Activated CD4-positive, alpha-beta memory T cell treated with anti-CD3 and anti-CD28 coated beads, Interleukin-2, amount 10 ng/mL, durations not matched to agents 7 days and 5 days (primary cell): ENCODE measurements at regions of chr1 and their contacts with region 1.

Region 1: DNA sequence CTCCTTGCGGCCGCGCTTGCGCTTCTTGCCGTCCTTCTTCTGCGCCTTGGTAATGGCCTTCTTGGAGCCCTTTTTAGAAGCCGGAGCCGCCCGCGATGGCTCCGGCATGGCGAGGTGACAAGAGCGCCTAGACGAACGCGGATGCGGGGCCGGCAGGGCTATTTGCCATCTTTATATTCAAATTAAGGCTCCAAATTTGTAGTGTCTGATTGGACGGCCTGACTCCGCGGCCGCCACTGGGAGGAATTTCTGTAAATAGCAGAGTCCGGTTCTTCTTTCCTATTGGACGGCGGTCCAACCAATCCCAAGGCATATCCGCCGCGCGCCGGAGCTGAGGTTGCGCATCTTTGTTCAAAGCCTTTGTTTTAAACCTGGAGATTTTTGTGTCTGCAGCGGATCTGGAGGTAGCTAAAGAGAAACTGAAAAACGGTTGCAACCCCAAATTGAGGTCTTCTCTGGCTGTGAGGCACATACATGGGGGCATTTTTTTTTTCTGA is 22.6 kb upstream of the RNF187 start:
- DNase-seq: peak; percentile 96
- H3K4me3 Mint-ChIP-seq: peak overlapping the region; percentile 76
- H3K27ac Mint-ChIP-seq: peak overlapping the region; percentile 91
- H3K4me1 Mint-ChIP-seq: peaks cover 68% of the 10 kb centered on the region
- H3K27me3 Mint-ChIP-seq: no peaks in the 10 kb centered on the region

Region 2: DNA sequence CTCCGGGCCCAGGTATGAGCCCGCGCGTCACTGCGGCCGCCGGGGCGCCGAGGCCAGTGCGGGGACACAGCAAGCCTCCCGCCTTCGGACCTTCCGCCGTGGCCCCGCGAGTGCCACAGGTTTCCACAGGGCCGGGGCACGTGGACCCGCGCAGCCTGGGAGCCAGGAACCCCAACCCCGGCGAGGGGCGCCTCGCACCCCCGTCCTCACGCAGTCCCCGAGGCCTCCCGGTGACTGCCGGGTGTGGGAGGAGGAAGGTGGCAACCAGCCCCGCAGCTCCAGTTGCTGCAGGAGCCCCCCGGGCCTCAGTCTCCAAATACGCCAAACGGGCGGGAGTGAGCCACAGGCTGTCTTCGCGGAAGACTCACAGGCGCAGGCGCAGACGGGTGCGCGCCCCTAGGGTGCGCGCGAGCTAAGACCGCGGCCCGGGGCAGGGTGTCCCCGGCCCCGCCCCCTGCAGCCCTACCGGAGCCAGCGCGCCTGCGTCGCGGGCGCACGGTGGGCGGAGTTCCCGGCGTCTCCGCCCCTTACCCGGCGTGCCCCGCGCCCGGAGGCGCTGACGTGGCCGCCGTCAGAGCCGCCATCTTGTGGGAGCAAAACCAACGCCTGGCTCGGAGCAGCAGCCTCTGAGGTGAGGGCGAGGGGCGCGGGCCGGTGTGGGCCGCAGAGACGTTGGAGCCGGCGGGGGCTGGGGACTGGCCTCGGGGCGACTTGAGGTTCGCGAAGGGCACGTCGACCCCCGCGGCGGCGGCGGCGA is 382.2 kb before region 1 on chr1 and contains the start of gene ARF1:
- CTCF ChIA-PET with region 1: no interaction called
- POLR2A ChIA-PET with region 1: interaction called, 12 read pairs
- DNase-seq: peak; percentile 94
- H3K4me3 Mint-ChIP-seq: peak within 1 kb of the TSS; percentile 90
- H3K27ac Mint-ChIP-seq: peak within 1 kb of the TSS; percentile 87
- H3K4me1 Mint-ChIP-seq: peaks cover 50% of the 10 kb centered on the region
- H3K27me3 Mint-ChIP-seq: no peaks in the 10 kb centered on the region
- total RNA-seq, gene ARF1: 368 to 376 TPM

Region 3: GRCh38 chr1:228405987-228406265 is 58.6 kb before region 1 on chr1:
- CTCF ChIA-PET with region 1: interaction called, 6 read pairs
- POLR2A ChIA-PET with region 1: interaction called, 90 read pairs
- DNase-seq: no peak
- H3K4me3 Mint-ChIP-seq: peak overlapping the region; percentile 85
- H3K27ac Mint-ChIP-seq: peak overlapping the region; percentile 90
- H3K4me1 Mint-ChIP-seq: peaks cover 61% of the 10 kb centered on the region
- H3K27me3 Mint-ChIP-seq: no peaks in the 10 kb centered on the region

Region 4: GRCh38 chr1:228445843-228446650 is 18.5 kb before region 1 on chr1:
- CTCF ChIA-PET with region 1: no interaction called
- POLR2A ChIA-PET with region 1: interaction called, 11 read pairs
- DNase-seq: peak; percentile 52
- H3K4me3 Mint-ChIP-seq: peak overlapping the region; percentile 74
- H3K27ac Mint-ChIP-seq: peak overlapping the region; percentile 18
- H3K4me1 Mint-ChIP-seq: peaks cover 19% of the 10 kb centered on the region
- H3K27me3 Mint-ChIP-seq: peaks cover 57% of the 10 kb centered on the region

Region 5: DNA sequence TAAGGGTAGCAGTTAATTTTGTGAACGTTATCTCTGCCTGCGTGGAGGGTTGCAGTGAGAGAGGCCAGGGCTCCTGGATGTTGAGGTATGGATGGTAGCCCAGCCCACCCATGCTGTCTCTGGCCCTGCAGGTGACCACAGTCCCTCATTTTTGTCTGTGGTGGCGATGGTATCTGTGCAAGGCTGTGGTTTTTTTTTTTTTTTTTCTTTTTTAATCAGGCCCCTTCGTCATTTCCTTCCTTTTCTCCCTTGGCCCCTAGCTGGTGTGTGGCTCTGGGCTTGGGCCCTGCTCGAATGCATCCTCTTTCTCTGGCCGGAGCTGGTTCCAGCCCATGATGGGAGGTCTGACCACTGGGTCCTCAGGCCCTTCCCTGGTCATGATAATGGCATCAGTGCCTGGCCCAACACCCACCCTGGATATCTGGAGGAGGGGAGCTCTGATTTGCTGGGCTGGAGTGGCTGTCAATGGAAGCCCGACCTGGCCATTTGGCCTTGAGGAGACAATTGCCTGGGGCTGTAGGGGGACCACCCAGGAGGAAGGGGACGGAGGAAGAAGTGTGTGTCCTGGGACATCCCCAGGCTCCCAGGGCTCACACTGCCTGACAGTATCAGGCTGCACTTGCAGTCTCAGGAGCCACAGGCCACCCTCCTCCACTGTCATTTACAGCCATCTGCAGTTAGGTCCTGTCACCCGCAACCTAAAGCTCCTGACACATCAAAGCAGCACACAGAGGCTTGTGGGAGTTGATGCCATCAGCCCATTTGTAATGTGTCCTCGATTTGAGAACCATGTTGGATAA is 14.6 kb after region 1 on chr1:
- CTCF ChIA-PET with region 1: interaction called, 21 read pairs
- POLR2A ChIA-PET with region 1: interaction called, 151 read pairs
- DNase-seq: peak; percentile 59
- H3K4me3 Mint-ChIP-seq: peak overlapping the region; percentile 48
- H3K27ac Mint-ChIP-seq: peak overlapping the region; percentile 91
- H3K4me1 Mint-ChIP-seq: peaks cover 62% of the 10 kb centered on the region
- H3K27me3 Mint-ChIP-seq: peaks cover 2% of the 10 kb centered on the region

Region 6: DNA sequence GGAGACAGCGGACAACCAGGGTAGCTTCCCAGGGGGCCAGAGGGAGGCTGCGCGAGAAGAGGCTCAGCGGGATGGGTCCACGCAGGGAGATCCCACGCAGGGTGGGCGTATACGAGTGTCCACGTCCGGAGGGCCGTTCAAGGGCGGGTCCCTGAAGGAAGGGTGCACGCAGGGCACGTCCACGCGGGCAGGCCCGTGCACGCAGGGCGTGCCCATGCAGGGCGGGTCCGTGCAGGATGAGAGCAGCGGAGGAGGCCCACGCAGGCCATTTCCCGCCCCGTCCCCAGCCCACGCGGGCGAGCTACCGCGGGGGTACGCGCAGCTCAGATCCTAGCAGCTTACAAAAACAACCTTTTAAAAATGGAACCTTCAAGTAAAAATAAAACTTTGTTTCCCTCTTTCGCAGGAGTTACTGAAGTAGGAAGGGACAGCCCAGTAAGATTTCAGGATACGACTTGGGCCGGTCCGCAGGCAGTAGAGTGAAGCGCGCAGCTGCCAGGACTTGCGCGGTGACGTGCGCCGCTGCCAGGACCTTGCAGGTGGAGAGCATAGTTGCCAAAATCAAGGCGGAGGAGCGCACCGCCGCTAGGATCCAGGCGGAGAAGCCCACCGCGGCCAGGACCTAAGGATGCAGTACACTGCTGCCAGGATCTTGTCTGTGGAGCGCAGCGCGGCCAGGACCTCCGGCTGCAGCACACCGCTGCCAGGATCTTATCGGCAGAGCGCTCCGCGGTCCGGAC is 22.2 kb after region 1 on chr1:
- CTCF ChIA-PET with region 1: interaction called, 24 read pairs
- POLR2A ChIA-PET with region 1: interaction called, 153 read pairs
- DNase-seq: peak; percentile 82
- H3K4me3 Mint-ChIP-seq: peak overlapping the region; percentile 94
- H3K27ac Mint-ChIP-seq: peak overlapping the region; percentile 96
- H3K4me1 Mint-ChIP-seq: peaks cover 56% of the 10 kb centered on the region
- H3K27me3 Mint-ChIP-seq: no peaks in the 10 kb centered on the region

Region 7: GRCh38 chr1:228500901-228501871 is 36.7 kb after region 1 on chr1:
- CTCF ChIA-PET with region 1: interaction called, 20 read pairs
- POLR2A ChIA-PET with region 1: interaction called, 24 read pairs
- DNase-seq: peak; percentile 90
- H3K4me3 Mint-ChIP-seq: peak overlapping the region; percentile 40
- H3K27ac Mint-ChIP-seq: peak overlapping the region; percentile 41
- H3K4me1 Mint-ChIP-seq: peaks cover 38% of the 10 kb centered on the region
- H3K27me3 Mint-ChIP-seq: no peaks in the 10 kb centered on the region

Region 8: GRCh38 chr1:228751360-228752113 is 287.0 kb after region 1 on chr1:
- CTCF ChIA-PET with region 1: no interaction called
- POLR2A ChIA-PET with region 1: no interaction called
- DNase-seq: no peak
- H3K4me3 Mint-ChIP-seq: no peak overlapping the region
- H3K27ac Mint-ChIP-seq: no peak overlapping the region
- H3K4me1 Mint-ChIP-seq: peaks cover 53% of the 10 kb centered on the region
- H3K27me3 Mint-ChIP-seq: peaks cover 25% of the 10 kb centered on the region